Ovary (tissue), 10 donors: ENCODE measurements at regions of chrX and their contacts with region 1.

Region 1: DNA sequence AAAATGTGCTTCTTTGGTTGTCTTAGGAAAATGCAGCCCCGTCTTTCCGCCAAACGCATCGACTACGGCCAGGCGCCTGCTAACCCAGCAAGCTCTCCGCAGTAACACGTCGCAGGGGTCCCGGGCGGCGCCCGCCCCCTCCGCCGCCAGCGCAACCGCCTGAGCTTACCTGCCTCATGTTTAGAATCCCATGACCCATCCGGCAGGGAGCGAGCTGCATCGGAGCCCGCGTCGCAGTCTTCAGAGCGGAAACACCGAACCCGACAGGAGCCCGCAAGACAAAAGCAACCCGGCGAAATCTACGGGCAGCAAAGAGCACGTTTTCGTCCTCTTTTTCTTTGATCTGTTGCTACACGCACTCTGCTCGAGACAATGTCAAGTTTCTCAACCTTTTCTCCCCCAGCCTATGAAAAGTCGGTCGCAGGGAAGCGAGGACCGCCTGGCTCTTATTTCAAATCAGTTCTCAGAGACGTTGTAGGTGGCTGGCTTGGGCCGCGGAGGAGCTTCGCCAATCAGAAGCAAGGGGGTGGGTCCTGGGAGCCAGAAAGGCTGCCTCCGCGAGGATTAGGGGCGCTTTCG is at the start of gene MID1:
- DNase-seq: peak; percentile 70 to 80 (median 74)
- H3K4me3 ChIP-seq: peak within 1 kb of the TSS; percentile 52
- H3K27ac ChIP-seq: peak within 1 kb of the TSS; percentile 71 to 72
- H3K4me1 ChIP-seq: peaks cover 3% of the 10 kb centered on the region
- H3K27me3 ChIP-seq: no peaks in the 10 kb centered on the region
- CTCF ChIP-seq: no peak
- EP300 ChIP-seq: no peak
- POLR2A ChIP-seq: peak; percentile 20
- total RNA-seq, gene MID1: 6.2 to 25.7 (median 17.5) TPM

Region 2: GRCh38 chrX:11111038-11111851 is 491.0 kb after region 1 on chrX and contains the start of gene HCCS:
- intact Hi-C with region 1: loop called in 1 of 4 experiments (anchors 5 kb)
- DNase-seq: peak; percentile 74 to 88 (median 83)
- H3K4me3 ChIP-seq: peak within 1 kb of the TSS; percentile 64
- H3K27ac ChIP-seq: peak within 1 kb of the TSS; percentile 52 to 64
- H3K4me1 ChIP-seq: no peaks in the 10 kb centered on the region
- H3K27me3 ChIP-seq: no peaks in the 10 kb centered on the region
- CTCF ChIP-seq: peak in 1 of 3 donors; percentile 10
- EP300 ChIP-seq: no peak
- POLR2A ChIP-seq: peak; percentile 66
- total RNA-seq, gene HCCS: 6.0 to 15.7 (median 14.2) TPM